ENCODE measurements at regions of chr12 and their contacts with region 1.

Region 1: GRCh38 chr12:47079468-47079980 is at the starts of genes AMIGO2 and PCED1B:
- DNase-seq: peak; percentile 90
- ATAC-seq: peak; percentile 73
- H3K4me3 ChIP-seq: peak within 1 kb of the TSS; percentile 80 to 95
- H3K27ac ChIP-seq: peak within 1 kb of the TSS; percentile 88 to 98
- H3K4me1 ChIP-seq: peaks cover 3 to 8% of the 10 kb centered on the region in 2 donors
- H3K27me3 ChIP-seq: no peaks in the 10 kb centered on the region
- total RNA-seq, gene AMIGO2: 23.1 to 72.1 TPM
- total RNA-seq, gene PCED1B: 11.0 to 12.6 TPM

Region 2: DNA sequence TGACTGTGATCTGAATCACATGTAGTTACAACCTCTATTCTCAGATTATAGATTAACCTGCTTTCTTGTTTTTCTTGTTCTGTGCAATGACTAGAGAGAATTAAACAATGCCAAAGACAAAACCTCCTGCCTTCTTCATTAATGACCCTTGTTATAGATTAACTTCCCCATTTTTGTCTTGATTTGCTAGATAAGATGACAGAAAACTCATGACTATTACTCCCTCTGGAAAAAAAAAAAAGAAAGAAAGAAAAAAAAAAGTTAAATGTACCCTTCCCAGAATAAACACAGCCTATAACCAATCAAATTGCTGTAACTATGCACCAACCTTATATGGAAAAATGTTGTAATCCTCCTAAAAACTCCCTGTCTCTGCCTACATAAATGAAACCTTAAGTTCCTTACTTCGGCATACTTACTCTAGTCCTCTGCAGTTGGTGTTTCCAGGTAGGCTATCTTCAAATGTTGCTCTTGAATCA is 41.2 kb before region 1 on chr12:
- intact Hi-C with region 1: loop called (anchors 5 kb)
- DNase-seq: no peak
- ATAC-seq: no peak
- H3K4me3 ChIP-seq: no peak overlapping the region
- H3K27ac ChIP-seq: no peak overlapping the region
- H3K4me1 ChIP-seq: no peaks in the 10 kb centered on the region
- H3K27me3 ChIP-seq: no peaks in the 10 kb centered on the region

Region 3: DNA sequence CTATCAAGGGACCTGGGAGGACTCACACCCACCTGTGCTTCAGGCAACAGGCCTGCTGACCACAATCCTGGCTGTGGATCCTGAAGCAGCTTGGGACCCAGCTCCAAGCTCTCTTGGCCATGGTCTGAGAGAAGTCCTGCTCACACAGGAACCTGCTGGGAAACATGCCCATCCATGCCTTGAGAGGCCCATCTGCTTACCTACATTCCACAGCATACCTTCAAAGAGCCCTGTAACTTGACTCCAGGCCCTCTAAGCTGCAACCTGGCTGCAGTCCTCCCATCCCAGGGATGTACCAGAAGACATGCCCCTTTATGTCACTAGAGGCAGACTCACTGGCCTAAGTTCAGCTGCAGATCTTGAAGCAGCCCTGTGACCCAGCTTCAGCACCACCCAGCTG is 61.9 kb after region 1 on chr12:
- intact Hi-C with region 1: loop called in 1 of 2 experiments (anchors 10 kb)
- DNase-seq: no peak
- ATAC-seq: no peak
- H3K4me3 ChIP-seq: no peak overlapping the region
- H3K27ac ChIP-seq: no peak overlapping the region
- H3K4me1 ChIP-seq: peaks cover 0 to 2% of the 10 kb centered on the region in 2 donors
- H3K27me3 ChIP-seq: no peaks in the 10 kb centered on the region

Region 4: GRCh38 chr12:47307680-47308399 is 228.3 kb after region 1 on chr12:
- intact Hi-C with region 1: loop called in 1 of 2 experiments (anchors 10 kb)
- DNase-seq: no peak
- ATAC-seq: peak; percentile 82
- H3K4me3 ChIP-seq: no peak overlapping the region
- H3K27ac ChIP-seq: no peak overlapping the region
- H3K4me1 ChIP-seq: no peaks in the 10 kb centered on the region
- H3K27me3 ChIP-seq: no peaks in the 10 kb centered on the region

Region 5: GRCh38 chr12:47504775-47505446 is 425.4 kb after region 1 on chr12:
- intact Hi-C with region 1: loop called in 1 of 2 experiments (anchors 10 kb)
- DNase-seq: no peak
- ATAC-seq: no peak
- H3K4me3 ChIP-seq: no peak overlapping the region
- H3K27ac ChIP-seq: peak overlapping the region; percentile 36 to 80
- H3K4me1 ChIP-seq: peaks cover 2 to 7% of the 10 kb centered on the region in 2 donors
- H3K27me3 ChIP-seq: no peaks in the 10 kb centered on the region

Region 6: DNA sequence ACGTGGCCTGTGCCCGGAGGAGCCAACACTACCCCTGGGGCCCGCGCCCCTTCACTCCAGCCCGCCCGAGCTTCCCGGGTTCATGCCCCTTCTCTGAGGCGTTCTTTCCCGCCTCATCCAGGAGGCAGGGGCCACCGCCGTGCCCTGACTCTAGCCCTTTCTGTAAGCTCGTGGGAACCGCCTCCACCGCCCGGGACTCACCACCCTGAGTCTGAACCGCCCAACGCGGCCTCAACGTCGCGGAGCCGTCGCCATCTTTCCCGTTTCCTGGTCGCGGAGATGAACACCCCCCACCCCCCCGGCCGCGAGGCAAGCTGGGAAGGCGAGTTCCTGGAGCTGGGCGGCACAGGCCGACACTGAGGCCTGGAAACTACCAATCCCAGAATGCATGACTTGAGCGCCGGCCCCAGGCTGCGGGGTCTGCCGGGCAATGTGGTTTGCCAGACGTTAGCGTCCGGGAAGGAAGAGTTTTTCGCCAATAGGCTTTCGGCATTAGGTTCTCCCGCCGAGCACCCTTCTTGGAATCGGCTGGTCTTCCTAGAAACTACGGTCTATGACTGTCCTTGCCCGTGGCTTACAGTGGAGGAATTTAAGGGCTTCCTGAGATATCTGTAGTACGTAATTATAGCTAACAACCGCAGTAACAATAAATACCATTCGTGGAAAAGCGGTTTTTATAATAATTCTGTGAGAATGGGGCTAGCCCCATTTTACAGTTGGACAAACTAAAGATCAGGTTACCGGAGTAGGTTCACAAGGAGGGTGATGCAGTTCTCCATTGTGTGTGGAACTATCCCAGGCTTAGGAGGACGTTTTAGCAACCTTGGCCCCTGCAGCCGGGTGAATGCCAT is 1772.6 kb after region 1 on chr12 and contains the start of gene DDX23:
- intact Hi-C with region 1: no loop called
- DNase-seq: peak; percentile 96 to 97
- ATAC-seq: peak; percentile 99
- H3K4me3 ChIP-seq: peak within 1 kb of the TSS; percentile 81 to 83
- H3K27ac ChIP-seq: peak within 1 kb of the TSS in 1 of 2 donors; percentile 82
- H3K4me1 ChIP-seq: no peaks in the 10 kb centered on the region
- H3K27me3 ChIP-seq: no peaks in the 10 kb centered on the region
- total RNA-seq, gene DDX23: 52.2 to 77.2 TPM